Right ventricle myocardium superior (tissue), 1 donor: ENCODE measurements at regions of chr2 and their contacts with region 1.

Region 1: DNA sequence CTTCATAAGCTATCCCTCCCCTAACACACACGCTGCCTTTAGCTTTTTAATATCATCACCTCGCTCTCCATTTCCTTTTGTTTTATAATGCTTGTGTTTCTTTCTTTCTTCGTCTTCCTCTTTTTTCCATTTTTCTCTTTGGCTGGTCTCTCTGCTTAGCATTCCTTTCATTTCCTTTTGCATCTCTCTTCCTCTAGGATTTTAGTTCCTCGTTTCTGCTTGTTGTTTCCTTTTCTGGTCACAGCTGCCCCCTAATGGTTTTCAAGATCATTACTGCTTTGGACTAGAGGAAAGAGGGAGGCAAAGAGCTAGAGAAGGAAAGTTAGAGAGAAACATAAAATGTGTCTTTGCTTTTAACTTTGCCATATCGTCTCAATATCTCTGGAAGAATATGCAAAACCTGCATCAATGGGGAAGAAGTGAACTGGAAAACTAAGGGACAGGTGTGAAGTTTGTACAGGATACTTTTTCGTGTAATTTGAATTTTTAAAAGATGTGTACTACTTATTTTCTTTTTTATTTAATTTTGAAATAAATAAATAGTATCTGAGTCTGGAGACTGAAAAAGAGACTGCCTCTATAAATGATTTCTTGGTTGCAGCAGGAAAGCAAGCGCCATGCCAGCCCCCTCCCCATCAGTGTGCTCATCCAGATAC is 6.3 kb upstream of the NRP2 start:
- DNase-seq: no peak
- ATAC-seq: peak; percentile 79

Region 2: DNA sequence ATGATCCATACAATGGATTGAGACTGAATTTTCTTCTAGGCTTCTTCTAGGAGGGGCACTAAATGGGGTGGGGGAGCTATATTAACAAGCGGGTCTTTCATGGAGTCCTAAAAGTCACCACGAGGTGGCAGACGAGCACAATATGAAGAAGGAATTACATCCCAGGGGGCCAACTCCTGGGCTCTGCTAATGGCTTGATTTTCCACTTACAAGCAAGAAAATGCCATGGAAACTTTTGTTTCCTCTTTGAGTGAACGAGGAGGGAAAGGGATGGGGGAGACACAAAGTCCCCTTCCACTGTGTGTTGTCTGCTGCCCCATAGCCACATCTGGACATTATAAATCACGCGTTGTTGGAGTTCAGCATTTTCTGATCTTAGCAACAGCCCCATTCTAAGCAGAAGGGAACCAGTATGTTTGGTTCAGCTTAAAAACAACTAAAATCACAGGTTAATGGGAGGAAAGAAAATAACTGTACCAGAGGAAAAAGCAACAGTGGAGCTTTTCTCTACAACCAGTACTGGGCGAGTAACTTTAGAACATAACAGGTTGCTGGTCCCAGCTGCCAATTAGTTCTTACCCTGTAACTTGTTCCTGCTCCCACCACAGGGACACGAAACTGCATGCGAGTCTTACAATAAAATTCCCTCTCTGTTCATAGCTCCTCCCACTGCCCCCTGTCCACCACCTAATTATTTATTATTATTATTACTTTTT is 1415.7 kb before region 1 on chr2:
- intact Hi-C with region 1: loop called (anchors 5 kb)
- DNase-seq: peak; percentile 70
- ATAC-seq: peak; percentile 78

Region 3: GRCh38 chr2:204325468-204325867 is 1350.5 kb before region 1 on chr2:
- intact Hi-C with region 1: loop called (anchors 10 kb)
- DNase-seq: no peak
- ATAC-seq: peak; percentile 86

Region 4: GRCh38 chr2:205957452-205958154 is 281.6 kb after region 1 on chr2:
- intact Hi-C with region 1: no loop called
- DNase-seq: no peak
- ATAC-seq: no peak